Gastrocnemius medialis (tissue), 4 donors: ENCODE measurements at regions of chr10 and their contacts with region 1.

Region 1: DNA sequence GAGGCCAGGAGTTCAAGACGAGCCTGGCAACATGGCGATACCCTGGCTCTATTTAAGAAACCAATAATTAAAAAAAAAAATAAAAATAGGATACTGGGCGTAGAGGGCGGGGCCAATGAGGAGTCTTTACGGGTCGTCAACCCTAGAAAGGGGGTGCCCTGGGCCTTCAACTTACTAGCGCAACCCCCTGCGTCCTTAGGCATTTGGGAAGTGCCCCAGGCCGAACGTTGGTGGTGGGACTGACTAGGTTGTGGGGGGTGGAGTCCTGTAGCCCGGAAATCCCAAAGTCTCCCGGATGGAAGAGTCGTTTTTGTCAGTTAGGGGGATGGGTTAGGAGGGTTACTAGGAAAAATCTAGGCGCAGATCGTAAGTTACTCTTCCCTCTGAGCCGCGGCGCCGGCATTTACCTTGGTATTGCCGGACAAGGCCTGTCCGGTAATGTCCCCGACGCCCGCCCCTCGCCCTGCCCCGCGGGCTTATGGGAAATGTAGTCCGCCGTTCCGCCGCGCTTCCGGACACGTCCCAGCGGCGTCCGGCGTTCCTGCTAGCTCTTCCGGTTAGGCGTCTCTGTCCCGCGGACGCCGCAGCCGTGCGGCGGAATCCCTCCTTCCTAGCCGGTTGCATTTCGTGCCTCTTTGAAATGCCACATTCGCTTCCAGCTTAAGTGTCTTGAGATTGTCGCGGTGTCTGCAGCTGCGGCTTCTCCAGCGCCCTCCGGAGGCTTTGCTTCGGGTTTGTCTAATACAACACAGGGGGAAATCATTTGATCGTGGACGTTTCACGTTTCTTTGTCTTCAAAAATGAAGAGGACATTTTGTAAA is 1.3 kb upstream of the ACBD5 start:
- DNase-seq: peak; percentile 86 to 88
- ATAC-seq: peak; percentile 83 to 84
- H3K4me3 ChIP-seq: peak overlapping the region; percentile 62 to 98 (median 83)
- H3K27ac ChIP-seq: peak overlapping the region; percentile 95 to 98 (median 98)
- H3K4me1 ChIP-seq: peaks cover 12 to 13% of the 10 kb centered on the region in 2 donors
- H3K27me3 ChIP-seq: no peaks in the 10 kb centered on the region
- CTCF ChIP-seq: peak; percentile 28 to 60 (median 39)
- POLR2A ChIP-seq: peak; percentile 95 to 96

Region 2: GRCh38 chr10:28532383-28533175 is 1290.7 kb after region 1 on chr10 and contains the start of gene WAC:
- in situ Hi-C with region 1: no loop called
- intact Hi-C with region 1: loop called (anchors 5 kb)
- DNase-seq: peak; percentile 92 to 94
- ATAC-seq: peak; percentile 91 to 93
- H3K4me3 ChIP-seq: peak within 1 kb of the TSS; percentile 78 to 99 (median 90)
- H3K27ac ChIP-seq: peak within 1 kb of the TSS; percentile 95 to 99 (median 98)
- H3K4me1 ChIP-seq: peaks cover 33 to 37% of the 10 kb centered on the region in 2 donors
- H3K27me3 ChIP-seq: no peaks in the 10 kb centered on the region
- CTCF ChIP-seq: peak in 3 of 5 experiments; percentile 14 to 17 (median 14)
- POLR2A ChIP-seq: peak in 1 of 2 donors; percentile 93
- total RNA-seq, gene WAC: 55.7 to 83.4 (median 69.6) TPM